CD8-positive, alpha-beta T cell (primary cell): ENCODE measurements at regions of chr10 and their contacts with region 1.

Region 1: GRCh38 chr10:32958085-32959005 is at the start of gene ITGB1:
- DNase-seq: peak; percentile 65 to 91 (median 82)
- ATAC-seq: peak; percentile 93
- H3K4me3 ChIP-seq: peak within 1 kb of the TSS; percentile 82 to 91
- H3K4me3 Mint-ChIP-seq: peak within 1 kb of the TSS; percentile 87
- H3K27ac ChIP-seq: peak within 1 kb of the TSS; percentile 49 to 77
- H3K27ac Mint-ChIP-seq: peak within 1 kb of the TSS; percentile 74
- H3K4me1 ChIP-seq: peaks cover 27% of the 10 kb centered on the region
- H3K4me1 Mint-ChIP-seq: peaks cover 54% of the 10 kb centered on the region
- H3K27me3 ChIP-seq: no peaks in the 10 kb centered on the region
- H3K27me3 Mint-ChIP-seq: no peaks in the 10 kb centered on the region
- CTCF ChIP-seq: no peak
- total RNA-seq, gene ITGB1: 34.2 to 34.5 TPM

Region 2: DNA sequence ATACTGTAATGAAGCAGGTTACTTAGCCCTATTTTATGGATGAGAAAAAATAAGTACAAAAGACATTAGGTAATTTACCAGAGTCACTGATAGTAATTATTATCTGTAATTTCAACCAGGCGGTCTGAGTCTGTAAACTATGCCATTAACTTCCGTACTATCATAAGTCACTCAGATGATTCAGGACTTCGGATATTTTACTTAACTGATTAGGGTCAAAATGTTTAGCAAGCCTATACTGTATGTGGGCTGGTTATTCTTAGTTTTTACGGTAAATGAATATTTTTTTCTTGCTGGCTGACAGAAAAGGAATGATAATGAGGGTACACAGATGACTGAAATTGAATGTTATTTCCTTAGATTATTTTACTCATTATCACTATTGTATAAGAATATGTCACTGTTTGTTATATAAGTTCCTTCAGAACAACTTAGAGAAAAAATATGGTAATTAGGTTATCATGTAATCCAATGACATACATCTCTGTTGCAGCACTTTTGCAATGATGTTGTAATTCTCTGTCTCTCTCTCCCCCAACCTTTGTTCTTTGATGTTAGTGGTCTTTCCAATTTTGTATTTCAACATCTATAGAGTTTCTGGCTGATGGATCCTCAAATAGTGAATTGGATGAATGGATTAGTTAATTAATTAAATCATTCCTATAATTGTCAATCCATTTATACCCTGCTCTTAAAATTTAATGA is 1473.8 kb before region 1 on chr10:
- CTCF ChIA-PET with region 1: no interaction called
- POLR2A ChIA-PET with region 1: no interaction called
- intact Hi-C with region 1: no loop called
- DNase-seq: no peak
- ATAC-seq: no peak
- H3K4me3 ChIP-seq: no peak overlapping the region
- H3K4me3 Mint-ChIP-seq: no peak overlapping the region
- H3K27ac ChIP-seq: no peak overlapping the region
- H3K27ac Mint-ChIP-seq: no peak overlapping the region
- H3K4me1 ChIP-seq: no peaks in the 10 kb centered on the region
- H3K4me1 Mint-ChIP-seq: no peaks in the 10 kb centered on the region
- H3K27me3 ChIP-seq: no peaks in the 10 kb centered on the region
- H3K27me3 Mint-ChIP-seq: no peaks in the 10 kb centered on the region
- CTCF ChIP-seq: no peak

Region 3: GRCh38 chr10:31928549-31929260 is 1029.6 kb before region 1 on chr10 and contains the start of gene ARHGAP12:
- CTCF ChIA-PET with region 1: no interaction called
- POLR2A ChIA-PET with region 1: no interaction called
- intact Hi-C with region 1: loop called in 1 of 2 experiments (anchors 5 kb)
- DNase-seq: peak; percentile 70 to 92 (median 84)
- ATAC-seq: peak; percentile 67
- H3K4me3 ChIP-seq: peak within 1 kb of the TSS; percentile 90 to 95
- H3K4me3 Mint-ChIP-seq: peak within 1 kb of the TSS; percentile 94
- H3K27ac ChIP-seq: peak within 1 kb of the TSS; percentile 65 to 87
- H3K27ac Mint-ChIP-seq: peak within 1 kb of the TSS; percentile 83
- H3K4me1 ChIP-seq: peaks cover 41% of the 10 kb centered on the region
- H3K4me1 Mint-ChIP-seq: peaks cover 49% of the 10 kb centered on the region
- H3K27me3 ChIP-seq: no peaks in the 10 kb centered on the region
- H3K27me3 Mint-ChIP-seq: no peaks in the 10 kb centered on the region
- CTCF ChIP-seq: no peak
- total RNA-seq, gene ARHGAP12: 15.7 to 15.9 TPM

Region 4: DNA sequence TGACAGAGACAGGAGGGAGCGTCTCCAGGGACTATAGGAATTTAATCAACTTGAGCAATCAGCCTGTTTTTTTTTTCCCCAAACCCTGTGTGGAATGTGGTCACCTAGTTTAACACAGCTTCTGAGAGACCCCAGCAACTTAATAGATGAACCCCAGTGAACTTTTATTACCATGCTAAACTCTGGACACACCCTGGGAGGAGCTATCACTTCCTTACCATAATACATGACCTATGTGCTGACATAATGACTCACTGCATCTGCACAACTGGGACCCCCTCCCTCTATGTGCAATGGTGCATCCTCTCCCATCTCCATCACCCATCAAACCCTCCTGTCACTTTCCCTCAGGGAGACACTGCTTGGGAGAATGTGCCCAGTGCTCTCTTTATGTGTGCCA is 695.0 kb before region 1 on chr10:
- CTCF ChIA-PET with region 1: no interaction called
- POLR2A ChIA-PET with region 1: no interaction called
- intact Hi-C with region 1: loop called in 1 of 2 experiments (anchors 5 kb)
- DNase-seq: no peak
- ATAC-seq: peak; percentile 42
- H3K4me3 ChIP-seq: no peak overlapping the region
- H3K4me3 Mint-ChIP-seq: no peak overlapping the region
- H3K27ac ChIP-seq: no peak overlapping the region
- H3K27ac Mint-ChIP-seq: no peak overlapping the region
- H3K4me1 ChIP-seq: no peaks in the 10 kb centered on the region
- H3K4me1 Mint-ChIP-seq: no peaks in the 10 kb centered on the region
- H3K27me3 ChIP-seq: no peaks in the 10 kb centered on the region
- H3K27me3 Mint-ChIP-seq: no peaks in the 10 kb centered on the region
- CTCF ChIP-seq: no peak

Region 5: GRCh38 chr10:32445740-32446535 is 512.4 kb before region 1 on chr10 and contains the start of gene CCDC7:
- CTCF ChIA-PET with region 1: no interaction called
- POLR2A ChIA-PET with region 1: no interaction called
- intact Hi-C with region 1: loop called (anchors 1 to 5 kb)
- DNase-seq: peak; percentile 73 to 96 (median 83)
- ATAC-seq: peak; percentile 95
- H3K4me3 ChIP-seq: peak within 1 kb of the TSS; percentile 68 to 99
- H3K4me3 Mint-ChIP-seq: peak within 1 kb of the TSS; percentile 94
- H3K27ac ChIP-seq: peak within 1 kb of the TSS; percentile 91 to 98
- H3K27ac Mint-ChIP-seq: peak within 1 kb of the TSS; percentile 100
- H3K4me1 ChIP-seq: peaks cover 4% of the 10 kb centered on the region
- H3K4me1 Mint-ChIP-seq: peaks cover 28% of the 10 kb centered on the region
- H3K27me3 ChIP-seq: no peaks in the 10 kb centered on the region
- H3K27me3 Mint-ChIP-seq: no peaks in the 10 kb centered on the region
- CTCF ChIP-seq: peak; percentile 45
- total RNA-seq, gene CCDC7: 50.1 to 59.0 TPM

Region 6: DNA sequence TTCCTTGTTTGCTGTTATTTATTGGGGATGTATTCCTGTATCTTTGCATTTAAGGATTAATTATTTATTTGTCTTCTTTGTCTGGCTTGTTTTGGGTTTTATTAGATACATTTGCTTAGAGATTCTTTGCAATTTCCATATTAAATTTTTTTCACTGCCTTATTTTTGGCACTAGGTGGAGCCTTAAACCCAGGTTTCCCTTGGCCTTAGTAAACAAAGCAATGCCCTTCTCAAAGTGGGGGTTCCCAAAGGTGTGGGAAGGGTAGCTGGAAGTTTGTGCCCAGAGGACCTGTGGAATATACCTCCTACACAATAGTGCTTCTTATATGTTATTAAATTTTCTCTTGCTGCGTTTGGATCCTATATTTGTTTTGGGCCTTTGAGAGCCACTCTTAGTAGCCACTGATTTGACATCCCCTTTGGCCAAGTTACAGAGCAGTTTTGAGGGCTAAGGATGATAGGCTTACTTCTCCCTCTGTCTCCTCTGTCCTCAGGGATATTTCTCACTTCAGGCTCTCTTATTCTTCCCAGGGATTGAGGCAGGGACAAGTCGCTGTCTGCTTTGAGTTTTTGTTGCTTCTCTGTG is 162.7 kb before region 1 on chr10:
- CTCF ChIA-PET with region 1: no interaction called
- POLR2A ChIA-PET with region 1: no interaction called
- intact Hi-C with region 1: no loop called
- DNase-seq: peak in 2 of 9 experiments; percentile 53 to 64
- ATAC-seq: no peak
- H3K4me3 ChIP-seq: no peak overlapping the region
- H3K4me3 Mint-ChIP-seq: no peak overlapping the region
- H3K27ac ChIP-seq: no peak overlapping the region
- H3K27ac Mint-ChIP-seq: no peak overlapping the region
- H3K4me1 ChIP-seq: no peaks in the 10 kb centered on the region
- H3K4me1 Mint-ChIP-seq: no peaks in the 10 kb centered on the region
- H3K27me3 ChIP-seq: no peaks in the 10 kb centered on the region
- H3K27me3 Mint-ChIP-seq: peaks cover 3% of the 10 kb centered on the region
- CTCF ChIP-seq: peak; percentile 53

Region 7: DNA sequence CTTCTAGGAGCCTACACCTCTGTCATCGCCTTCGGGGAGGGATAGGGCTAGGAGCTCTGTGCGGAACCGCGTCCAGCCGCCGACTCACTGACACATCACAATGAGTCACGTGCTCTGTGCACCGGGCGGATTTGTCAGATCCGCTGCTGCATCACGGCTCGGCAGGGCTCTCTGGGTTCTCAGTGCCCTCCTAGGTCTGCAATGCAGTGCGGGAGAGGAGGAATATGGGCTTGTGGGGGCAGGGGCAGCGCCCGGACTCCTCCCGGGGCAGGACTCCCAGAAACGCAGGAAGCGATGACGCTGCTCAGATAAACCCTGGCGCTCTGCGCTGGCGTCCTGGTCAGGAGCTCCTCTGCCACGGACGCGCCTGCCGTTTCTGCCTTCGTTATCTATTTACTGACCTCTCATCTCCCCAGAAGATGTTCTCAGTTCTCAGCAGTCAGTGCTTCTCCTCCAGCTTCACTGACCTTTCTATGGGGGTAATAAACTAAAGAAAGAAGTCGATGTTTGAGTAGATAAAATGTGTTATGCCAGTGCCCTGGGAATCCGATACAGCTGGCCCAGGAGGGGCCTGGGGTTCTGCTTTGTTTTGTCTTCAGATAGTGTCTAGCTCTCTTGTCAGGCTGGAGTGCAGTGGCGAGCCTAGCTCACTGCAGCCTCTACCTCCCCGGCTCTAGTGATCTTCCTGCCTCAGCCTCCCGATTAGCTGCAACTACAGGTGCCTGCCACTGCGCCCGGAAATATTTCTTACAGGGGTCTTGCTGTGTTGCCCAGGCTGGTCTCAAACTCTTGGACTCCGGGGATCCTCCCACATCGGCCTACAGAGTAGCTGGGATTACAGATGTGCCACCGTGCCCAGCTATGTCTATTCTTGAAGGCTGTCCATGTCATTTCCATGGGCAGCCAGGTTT is 22.5 kb after region 1 on chr10:
- CTCF ChIA-PET with region 1: interaction called, 8 read pairs
- POLR2A ChIA-PET with region 1: interaction called, 10 read pairs
- intact Hi-C with region 1: loop called (anchors 1 to 2 kb)
- DNase-seq: peak; percentile 61 to 91 (median 85)
- ATAC-seq: peak; percentile 90
- H3K4me3 ChIP-seq: peak overlapping the region; percentile 52 to 66
- H3K4me3 Mint-ChIP-seq: peak overlapping the region; percentile 96
- H3K27ac ChIP-seq: peak overlapping the region; percentile 68 to 94
- H3K27ac Mint-ChIP-seq: peak overlapping the region; percentile 97
- H3K4me1 ChIP-seq: peaks cover 25% of the 10 kb centered on the region
- H3K4me1 Mint-ChIP-seq: peaks cover 34% of the 10 kb centered on the region
- H3K27me3 ChIP-seq: no peaks in the 10 kb centered on the region
- H3K27me3 Mint-ChIP-seq: no peaks in the 10 kb centered on the region
- CTCF ChIP-seq: no peak

Region 8: DNA sequence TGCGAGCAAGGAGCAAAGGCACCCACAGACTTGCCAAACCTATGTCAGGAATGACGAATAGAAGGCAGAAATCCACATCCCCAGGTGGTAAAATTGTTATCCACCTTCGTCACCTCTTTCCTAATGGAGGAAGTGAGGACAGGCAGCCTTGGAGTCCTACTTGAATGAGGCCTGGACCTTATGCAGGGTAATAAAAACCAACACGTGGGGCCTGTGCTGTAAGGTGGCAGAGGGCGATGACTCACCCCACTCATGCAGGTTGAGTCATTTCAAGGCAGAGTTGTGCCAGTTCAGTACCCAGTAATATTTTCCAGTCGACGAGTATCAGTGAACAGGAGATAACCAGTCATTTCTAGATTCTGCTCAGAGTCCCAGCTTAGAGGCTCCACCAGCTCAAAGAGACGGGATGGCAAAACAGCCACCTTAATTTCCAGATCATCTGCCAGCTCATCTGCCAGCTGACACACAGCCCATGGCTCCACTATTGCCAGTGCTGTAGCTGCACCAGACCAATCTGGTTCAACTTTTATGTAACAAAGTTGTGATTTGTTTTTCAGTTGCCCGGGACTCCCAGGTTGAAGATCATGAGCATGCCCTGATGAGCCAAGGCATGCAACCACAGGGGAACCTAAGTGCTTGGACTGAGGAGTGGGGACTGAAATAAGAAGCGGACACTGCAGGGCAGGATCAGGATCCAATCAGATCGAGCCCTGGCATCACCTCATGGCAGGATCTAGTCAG is 175.8 kb after region 1 on chr10:
- CTCF ChIA-PET with region 1: no interaction called
- POLR2A ChIA-PET with region 1: no interaction called
- intact Hi-C with region 1: loop called (anchors 1 to 5 kb)
- DNase-seq: peak in 8 of 9 experiments; percentile 51 to 87 (median 72)
- ATAC-seq: peak; percentile 67
- H3K4me3 ChIP-seq: no peak overlapping the region
- H3K4me3 Mint-ChIP-seq: no peak overlapping the region
- H3K27ac ChIP-seq: peak overlapping the region; percentile 30 to 55
- H3K27ac Mint-ChIP-seq: peak overlapping the region; percentile 66
- H3K4me1 ChIP-seq: peaks cover 48% of the 10 kb centered on the region
- H3K4me1 Mint-ChIP-seq: peaks cover 70% of the 10 kb centered on the region
- H3K27me3 ChIP-seq: no peaks in the 10 kb centered on the region
- H3K27me3 Mint-ChIP-seq: no peaks in the 10 kb centered on the region
- CTCF ChIP-seq: no peak

Region 9: DNA sequence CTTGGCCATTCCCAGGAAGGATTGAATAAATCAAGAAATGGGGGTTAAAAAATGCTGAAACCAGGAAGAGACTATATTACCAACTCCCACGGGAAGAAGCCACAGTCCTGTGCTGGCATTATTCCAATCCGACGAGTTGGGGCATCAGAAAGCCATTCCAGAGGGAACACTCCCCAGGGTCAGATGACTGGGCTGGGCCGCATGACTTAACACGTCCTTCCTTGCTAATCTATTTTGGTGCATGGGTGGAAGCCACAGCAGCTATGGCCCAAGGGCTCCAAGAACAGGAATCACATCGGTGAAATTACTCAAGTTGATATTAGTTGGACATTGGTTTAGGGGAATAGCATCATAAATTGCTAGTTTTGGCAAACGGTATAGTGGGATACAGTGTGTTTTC is 969.0 kb after region 1 on chr10:
- CTCF ChIA-PET with region 1: no interaction called
- POLR2A ChIA-PET with region 1: no interaction called
- intact Hi-C with region 1: no loop called
- DNase-seq: no peak
- ATAC-seq: no peak
- H3K4me3 ChIP-seq: no peak overlapping the region
- H3K4me3 Mint-ChIP-seq: no peak overlapping the region
- H3K27ac ChIP-seq: no peak overlapping the region
- H3K27ac Mint-ChIP-seq: no peak overlapping the region
- H3K4me1 ChIP-seq: no peaks in the 10 kb centered on the region
- H3K4me1 Mint-ChIP-seq: no peaks in the 10 kb centered on the region
- H3K27me3 ChIP-seq: peaks cover 0 to 2% of the 10 kb centered on the region in 2 experiments
- H3K27me3 Mint-ChIP-seq: peaks cover 2% of the 10 kb centered on the region
- CTCF ChIP-seq: no peak